ENCODE measurements at regions of chr7 and their contacts with region 1.

Region 1: GRCh38 chr7:6392706-6393666 is 54.8 kb downstream of the DAGLB start:
- DNase-seq: peak; percentile 52 to 82
- ATAC-seq: peak; percentile 67 to 92 (median 86)
- H3K4me3 ChIP-seq: no peak overlapping the region
- H3K27ac ChIP-seq: peak overlapping the region; percentile 69 to 93 (median 78)
- H3K4me1 ChIP-seq: peaks cover 14 to 90% (median 64%) of the 10 kb centered on the region in 9 donors
- H3K27me3 ChIP-seq: no peaks in the 10 kb centered on the region
- CTCF ChIP-seq: no peak

Region 2: GRCh38 chr7:6375348-6376101 is 17.5 kb before region 1 on chr7:
- intact Hi-C with region 1: loop called in 1 of 10 experiments (anchors 2 kb)
- DNase-seq: no peak
- ATAC-seq: no peak
- H3K4me3 ChIP-seq: peak overlapping the region; percentile 70 to 97 (median 86)
- H3K27ac ChIP-seq: peak overlapping the region; percentile 85 to 99 (median 95)
- H3K4me1 ChIP-seq: peaks cover 11 to 57% (median 50%) of the 10 kb centered on the region in 9 donors
- H3K27me3 ChIP-seq: no peaks in the 10 kb centered on the region
- CTCF ChIP-seq: no peak

Measured in heart right ventricle (tissue), 16 donors.